ENCODE measurements at regions of chr7 and their contacts with region 1.

Region 1: GRCh38 chr7:150346922-150347321 is 5.5 kb upstream of the RARRES2 start:
- DNase-seq: peak; percentile 44
- H3K4me3 ChIP-seq: no peak overlapping the region
- H3K27ac ChIP-seq: peak overlapping the region; percentile 23
- H3K4me1 ChIP-seq: no peaks in the 10 kb centered on the region
- H3K27me3 ChIP-seq: no peaks in the 10 kb centered on the region
- CTCF ChIP-seq: no peak

Region 2: GRCh38 chr7:150365673-150366398 is 18.9 kb after region 1 on chr7:
- CTCF ChIA-PET with region 1: no interaction called
- POLR2A ChIA-PET with region 1: interaction called, 19 read pairs
- intact Hi-C with region 1: no loop called
- DNase-seq: no peak
- H3K4me3 ChIP-seq: no peak overlapping the region
- H3K27ac ChIP-seq: no peak overlapping the region
- H3K4me1 ChIP-seq: peaks cover 39% of the 10 kb centered on the region
- H3K27me3 ChIP-seq: no peaks in the 10 kb centered on the region
- CTCF ChIP-seq: no peak

Region 3: GRCh38 chr7:150898475-150899011 is 551.6 kb after region 1 on chr7:
- CTCF ChIA-PET with region 1: no interaction called
- POLR2A ChIA-PET with region 1: no interaction called
- intact Hi-C with region 1: no loop called
- DNase-seq: peak; percentile 72
- H3K4me3 ChIP-seq: no peak overlapping the region
- H3K27ac ChIP-seq: no peak overlapping the region
- H3K4me1 ChIP-seq: peaks cover 6% of the 10 kb centered on the region
- H3K27me3 ChIP-seq: no peaks in the 10 kb centered on the region
- CTCF ChIP-seq: peak; percentile 98